ENCODE measurements at regions of chr1 and their contacts with region 1.

Region 1: GRCh38 chr1:160837558-160838205 is 25.0 kb downstream of the CD244 start:
- DNase-seq: peak; percentile 80

Region 2: GRCh38 chr1:160951443-160952128 is 113.9 kb after region 1 on chr1:
- intact Hi-C with region 1: loop called (anchors 2 kb)
- DNase-seq: no peak